PC-9 (cell line): ENCODE measurements at regions of chr1 and their contacts with region 1.

Region 1: DNA sequence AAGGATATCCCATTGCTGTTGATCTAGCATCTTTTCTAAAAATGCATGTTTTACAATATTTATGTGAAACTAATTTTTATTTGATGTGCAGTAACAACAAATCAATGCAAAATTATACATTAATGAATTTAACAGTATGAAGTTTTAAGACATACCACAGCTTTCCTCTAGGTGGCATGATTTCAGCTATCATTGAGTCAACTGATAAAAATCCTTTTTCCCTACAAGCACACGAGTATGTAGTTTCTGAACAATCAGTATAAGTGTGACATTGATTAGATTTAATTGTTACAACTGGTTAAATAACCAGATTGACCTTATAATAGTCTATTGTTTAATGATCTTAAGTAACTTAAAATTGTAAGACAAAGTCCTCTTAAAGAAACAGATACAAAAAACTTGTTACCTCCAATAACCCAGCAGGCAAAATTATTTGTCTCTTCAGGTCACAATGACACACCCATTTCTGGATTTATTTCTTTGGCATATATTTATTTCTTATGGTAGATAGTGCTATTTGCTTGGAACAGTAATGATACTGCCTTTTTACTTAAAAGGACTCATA is 5.8 kb upstream of the TGFB2 start:
- DNase-seq: no peak
- H3K4me3 ChIP-seq: no peak overlapping the region
- H3K27ac ChIP-seq: no peak overlapping the region
- H3K4me1 ChIP-seq: peaks cover 17% of the 10 kb centered on the region
- H3K27me3 ChIP-seq: no peaks in the 10 kb centered on the region
- CTCF ChIP-seq: peak; percentile 88

Region 2: GRCh38 chr1:218171285-218171893 is 168.0 kb before region 1 on chr1:
- CTCF ChIA-PET with region 1: no interaction called
- POLR2A ChIA-PET with region 1: no interaction called
- intact Hi-C with region 1: no loop called
- DNase-seq: no peak
- H3K4me3 ChIP-seq: no peak overlapping the region
- H3K27ac ChIP-seq: no peak overlapping the region
- H3K4me1 ChIP-seq: no peaks in the 10 kb centered on the region
- H3K27me3 ChIP-seq: no peaks in the 10 kb centered on the region
- CTCF ChIP-seq: peak; percentile 86

Region 3: DNA sequence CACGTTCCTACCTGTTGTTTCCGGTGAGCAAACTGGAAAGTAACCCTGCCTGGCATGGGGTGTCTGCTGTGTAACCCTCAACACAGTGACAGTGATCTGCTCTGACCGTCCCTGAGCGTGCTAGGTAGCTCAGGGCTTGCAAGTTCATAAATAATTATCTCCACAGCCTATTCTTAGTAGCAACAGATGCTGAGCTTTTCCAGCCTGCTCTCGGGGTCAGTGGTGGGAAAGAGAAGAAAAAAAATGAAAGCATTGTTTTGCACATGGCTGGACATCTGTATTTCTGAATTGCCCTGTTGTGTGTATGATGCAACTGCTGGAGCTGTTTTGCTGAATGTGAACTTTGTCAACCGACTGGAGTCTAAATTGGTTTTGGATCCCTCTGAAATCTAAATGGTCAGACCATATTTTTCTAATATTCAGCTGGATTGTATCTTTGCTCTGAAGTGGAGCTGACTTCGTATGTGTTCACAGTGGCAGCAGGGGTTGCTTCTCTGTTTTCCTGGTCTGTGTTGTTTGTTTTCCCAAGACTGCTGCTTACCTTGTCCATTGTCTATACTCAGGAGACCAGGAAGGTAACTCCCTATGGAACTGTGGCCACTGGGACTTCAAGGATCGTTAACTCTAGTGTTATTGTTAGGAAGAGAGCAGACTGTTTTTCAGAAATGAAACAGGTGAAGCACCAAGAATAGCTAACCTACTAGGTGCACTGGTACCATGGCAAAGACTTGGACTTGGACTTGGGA is 32.8 kb after region 1 on chr1:
- CTCF ChIA-PET with region 1: no interaction called
- POLR2A ChIA-PET with region 1: no interaction called
- intact Hi-C with region 1: no loop called
- DNase-seq: no peak
- H3K4me3 ChIP-seq: no peak overlapping the region
- H3K27ac ChIP-seq: no peak overlapping the region
- H3K4me1 ChIP-seq: peaks cover 47% of the 10 kb centered on the region
- H3K27me3 ChIP-seq: no peaks in the 10 kb centered on the region
- CTCF ChIP-seq: no peak

Region 4: GRCh38 chr1:219235903-219236481 is 896.6 kb after region 1 on chr1:
- CTCF ChIA-PET with region 1: interaction called, 19 read pairs
- POLR2A ChIA-PET with region 1: no interaction called
- intact Hi-C with region 1: no loop called
- DNase-seq: no peak
- H3K4me3 ChIP-seq: no peak overlapping the region
- H3K27ac ChIP-seq: no peak overlapping the region
- H3K4me1 ChIP-seq: no peaks in the 10 kb centered on the region
- H3K27me3 ChIP-seq: no peaks in the 10 kb centered on the region
- CTCF ChIP-seq: no peak